Activated CD4-positive, alpha-beta memory T cell treated with anti-CD3 and anti-CD28 coated beads, Interleukin-2, amount 10 ng/mL, durations not matched to agents 7 days and 5 days (primary cell): ENCODE measurements at regions of chr19 and their contacts with region 1.

Region 1: GRCh38 chr19:45092747-45093678 is at the start of gene PPP1R37:
- DNase-seq: peak; percentile 92
- H3K4me3 Mint-ChIP-seq: peak within 1 kb of the TSS; percentile 77
- H3K27ac Mint-ChIP-seq: peak within 1 kb of the TSS; percentile 81
- H3K4me1 Mint-ChIP-seq: peaks cover 63% of the 10 kb centered on the region
- H3K27me3 Mint-ChIP-seq: no peaks in the 10 kb centered on the region
- total RNA-seq, gene PPP1R37: 16.3 to 16.4 TPM

Region 2: DNA sequence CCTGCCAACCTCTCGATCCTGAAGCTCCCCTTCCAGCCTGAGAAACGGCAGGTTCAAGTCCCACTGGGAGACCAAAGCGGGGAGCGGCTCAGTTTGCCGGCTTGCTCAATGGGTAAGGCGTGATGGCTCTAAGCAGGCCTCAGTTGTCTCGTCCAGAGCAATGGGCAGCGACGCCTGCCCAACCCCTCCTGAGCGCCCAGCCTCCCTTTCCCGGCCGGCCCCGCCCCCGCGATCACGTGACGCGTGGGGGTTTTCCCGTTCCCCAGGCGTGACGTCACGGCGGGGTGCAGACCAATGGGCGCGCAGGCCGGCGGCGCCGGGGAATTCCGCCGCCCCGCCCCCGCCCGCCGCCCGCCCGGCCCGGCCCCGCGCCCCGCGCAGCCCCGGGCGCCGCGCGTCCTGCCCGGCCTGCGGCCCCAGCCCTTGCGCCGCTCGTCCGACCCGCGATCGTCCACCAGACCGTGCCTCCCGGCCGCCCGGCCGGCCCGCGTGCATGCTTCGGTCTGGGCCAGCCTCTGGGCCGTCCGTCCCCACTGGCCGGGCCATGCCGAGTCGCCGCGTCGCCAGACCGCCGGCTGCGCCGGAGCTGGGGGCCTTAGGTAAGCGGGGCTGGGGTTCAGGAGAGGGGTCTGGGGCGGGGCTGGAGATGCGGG is 91.8 kb before region 1 on chr19 and contains the start of gene RELB:
- CTCF ChIA-PET with region 1: no interaction called
- POLR2A ChIA-PET with region 1: interaction called, 18 read pairs
- DNase-seq: peak; percentile 95
- H3K4me3 Mint-ChIP-seq: peak within 1 kb of the TSS; percentile 95
- H3K27ac Mint-ChIP-seq: peak within 1 kb of the TSS; percentile 99
- H3K4me1 Mint-ChIP-seq: peaks cover 26% of the 10 kb centered on the region
- H3K27me3 Mint-ChIP-seq: no peaks in the 10 kb centered on the region
- total RNA-seq, gene RELB: 32.6 to 33.5 TPM

Region 3: GRCh38 chr19:45059278-45059965 is 33.6 kb before region 1 on chr19:
- CTCF ChIA-PET with region 1: interaction called, 10 read pairs
- POLR2A ChIA-PET with region 1: interaction called, 3 read pairs
- DNase-seq: peak; percentile 85
- H3K4me3 Mint-ChIP-seq: no peak overlapping the region
- H3K27ac Mint-ChIP-seq: peak overlapping the region; percentile 53
- H3K4me1 Mint-ChIP-seq: peaks cover 2% of the 10 kb centered on the region
- H3K27me3 Mint-ChIP-seq: no peaks in the 10 kb centered on the region

Region 4: DNA sequence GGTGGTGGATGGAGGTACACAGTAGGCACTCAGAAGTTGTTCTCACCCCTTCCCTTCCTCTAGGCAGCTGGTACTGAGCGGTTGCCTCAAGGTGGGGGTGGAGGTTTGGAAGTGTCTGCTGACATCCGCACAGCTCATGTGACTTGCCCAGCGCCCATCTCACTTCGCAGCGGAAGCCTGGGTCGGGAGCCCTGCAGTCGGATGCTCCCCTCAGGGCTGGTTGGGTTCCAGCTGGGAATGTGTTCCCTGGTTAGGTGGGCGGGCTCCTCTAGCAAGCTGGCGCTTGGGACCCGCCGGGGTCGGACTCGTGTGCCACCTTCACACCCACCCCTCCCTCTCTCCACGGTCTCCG is 10.1 kb after region 1 on chr19:
- CTCF ChIA-PET with region 1: interaction called, 3 read pairs
- POLR2A ChIA-PET with region 1: interaction called, 18 read pairs
- DNase-seq: peak; percentile 59
- H3K4me3 Mint-ChIP-seq: peak overlapping the region; percentile 51
- H3K27ac Mint-ChIP-seq: no peak overlapping the region
- H3K4me1 Mint-ChIP-seq: peaks cover 33% of the 10 kb centered on the region
- H3K27me3 Mint-ChIP-seq: no peaks in the 10 kb centered on the region

Region 5: GRCh38 chr19:45125926-45126493 is 33.0 kb after region 1 on chr19:
- CTCF ChIA-PET with region 1: interaction called, 22 read pairs
- POLR2A ChIA-PET with region 1: interaction called, 5 read pairs
- DNase-seq: peak; percentile 75
- H3K4me3 Mint-ChIP-seq: no peak overlapping the region
- H3K27ac Mint-ChIP-seq: no peak overlapping the region
- H3K4me1 Mint-ChIP-seq: peaks cover 22% of the 10 kb centered on the region
- H3K27me3 Mint-ChIP-seq: no peaks in the 10 kb centered on the region

Region 6: DNA sequence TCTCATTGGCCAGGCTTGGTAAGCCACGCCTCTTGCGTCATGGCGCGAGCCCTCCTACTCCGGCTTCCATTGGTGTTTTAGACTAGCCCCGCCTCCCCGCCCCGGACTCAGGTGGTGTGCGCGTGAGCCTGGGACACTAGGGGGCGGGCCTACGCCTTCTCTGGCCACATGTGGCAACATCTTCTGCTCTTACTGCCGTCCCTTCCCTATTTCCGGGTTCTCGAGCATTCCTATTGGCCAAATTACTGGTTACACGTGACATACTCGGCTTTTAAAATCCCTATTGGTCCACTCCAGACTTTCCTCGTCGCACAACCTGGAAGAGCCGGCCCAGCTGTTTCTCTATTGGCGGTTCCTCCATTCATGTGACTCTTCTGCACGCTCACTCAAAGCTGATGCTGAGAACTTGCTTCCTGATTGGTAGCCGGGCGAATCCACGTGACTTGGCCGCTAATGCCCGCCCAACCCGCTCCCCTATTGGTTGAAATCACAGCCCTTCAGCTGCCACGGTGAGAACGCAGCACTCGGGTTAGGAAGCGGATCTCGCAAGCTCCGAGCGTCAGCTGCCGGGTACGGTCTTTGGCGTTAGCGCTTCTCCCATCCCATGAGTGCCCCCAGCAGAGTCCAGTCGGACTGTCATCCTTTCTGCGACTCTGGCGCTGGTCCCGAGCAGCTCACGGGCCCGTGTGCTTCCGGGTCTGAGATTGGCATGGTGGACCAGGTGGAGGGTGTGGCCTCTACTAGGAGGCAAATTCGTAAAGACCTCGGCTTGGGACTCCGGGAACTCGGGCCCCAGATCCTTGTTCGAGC is 85.5 kb after region 1 on chr19 and contains the start of gene BLOC1S3:
- CTCF ChIA-PET with region 1: interaction called, 14 read pairs
- POLR2A ChIA-PET with region 1: interaction called, 40 read pairs
- DNase-seq: peak; percentile 100
- H3K4me3 Mint-ChIP-seq: peak within 1 kb of the TSS; percentile 81
- H3K27ac Mint-ChIP-seq: peak within 1 kb of the TSS; percentile 87
- H3K4me1 Mint-ChIP-seq: peaks cover 46% of the 10 kb centered on the region
- H3K27me3 Mint-ChIP-seq: no peaks in the 10 kb centered on the region
- total RNA-seq, gene BLOC1S3: 16.3 to 20.4 TPM